ENCODE measurements at regions of chr15 and their contacts with region 1.

Region 1: DNA sequence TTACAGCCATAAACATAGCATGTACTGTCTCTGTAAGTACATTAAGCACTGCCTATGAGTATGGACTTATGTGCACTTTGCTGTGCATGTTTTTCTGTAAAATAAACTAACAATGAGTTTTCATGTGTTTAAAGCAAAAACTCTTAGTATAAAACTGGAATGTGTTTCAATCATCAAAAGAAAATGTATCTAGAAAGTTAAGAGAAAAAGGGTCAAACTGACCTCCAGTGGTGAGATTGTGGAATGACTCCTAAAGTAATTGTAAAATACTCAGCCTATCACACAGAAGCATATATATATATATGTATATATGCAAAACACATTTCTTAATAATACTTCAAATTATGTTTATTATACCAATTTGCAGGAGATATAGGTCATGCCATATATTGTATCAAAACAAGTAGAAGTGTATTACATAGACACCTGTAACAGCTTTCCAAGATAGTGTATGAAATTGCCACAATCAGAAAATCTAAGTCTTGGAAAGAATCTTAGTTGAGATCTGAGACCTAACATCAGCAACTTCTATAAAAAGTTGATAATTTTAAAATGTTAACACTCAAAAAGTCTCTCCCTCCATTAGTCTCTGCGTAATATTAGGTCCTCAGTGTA is 199.6 kb downstream of the FMN1 start:
- DNase-seq: no peak
- ATAC-seq: no peak

Region 2: DNA sequence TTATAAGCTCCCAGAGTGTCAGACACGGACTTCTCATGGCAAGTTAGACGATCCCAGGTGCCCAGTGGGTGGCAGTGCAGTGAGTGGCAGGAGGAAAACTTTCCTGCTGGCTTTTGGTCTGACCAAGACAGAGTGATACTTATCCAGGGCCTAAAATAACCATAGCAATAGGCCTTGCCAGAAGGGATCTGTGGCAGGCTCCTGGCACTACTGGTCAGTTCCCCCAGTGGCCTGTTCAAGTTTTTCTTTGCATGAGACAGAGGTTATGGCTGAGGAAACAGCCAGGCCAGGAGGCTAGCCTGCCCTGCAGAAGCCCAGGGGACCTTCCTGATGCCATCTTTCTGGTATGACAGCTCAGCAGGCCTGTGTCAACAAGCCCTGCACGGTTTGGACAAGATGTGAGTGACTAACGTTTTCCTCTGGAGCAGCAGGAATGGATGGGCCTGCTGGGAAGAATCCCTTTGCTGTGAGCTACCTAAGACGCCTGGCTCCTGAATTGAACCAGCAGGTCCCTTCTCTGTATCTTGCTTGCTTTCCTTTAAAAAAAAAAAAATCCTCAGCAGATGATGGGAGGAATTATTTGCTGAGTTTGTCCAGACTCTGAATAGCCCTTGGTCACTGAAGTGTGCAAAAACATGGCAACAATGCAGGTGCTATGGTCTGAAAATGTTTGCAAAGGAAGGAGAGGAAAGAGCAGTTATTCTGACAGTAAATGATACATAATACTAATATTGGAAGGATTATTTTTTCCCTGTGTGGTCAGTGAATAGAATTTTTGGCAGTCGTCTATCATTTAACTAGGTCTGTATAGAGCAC is 335.4 kb before region 1 on chr15:
- intact Hi-C with region 1: loop called (anchors 2 kb)
- DNase-seq: no peak
- ATAC-seq: peak; percentile 54

Region 3: GRCh38 chr15:32844118-32844711 is 150.7 kb before region 1 on chr15:
- intact Hi-C with region 1: loop called (anchors 2 kb)
- DNase-seq: no peak
- ATAC-seq: no peak

Region 4: DNA sequence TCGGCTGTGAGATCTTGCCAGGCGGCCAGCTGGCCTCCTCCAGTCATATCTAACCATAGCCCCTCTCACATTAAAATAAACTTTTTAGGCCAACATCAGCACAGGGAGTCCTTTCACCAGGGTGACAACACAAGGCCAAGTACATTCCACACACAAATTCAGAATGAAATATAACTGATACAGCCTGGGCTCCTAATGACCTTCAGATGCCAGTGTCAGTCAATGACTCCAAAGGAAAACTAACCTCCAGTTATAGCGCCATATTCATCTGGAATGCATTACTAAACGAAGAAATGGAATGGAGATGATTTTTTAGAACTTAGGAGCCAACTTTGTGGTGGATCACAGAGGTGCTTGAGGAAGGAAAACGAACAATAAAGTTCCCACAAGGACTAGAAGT is 71.7 kb before region 1 on chr15:
- intact Hi-C with region 1: no loop called
- DNase-seq: no peak
- ATAC-seq: no peak

Region 5: GRCh38 chr15:32959077-32959476 is 35.8 kb before region 1 on chr15:
- intact Hi-C with region 1: no loop called
- DNase-seq: no peak
- ATAC-seq: peak; percentile 83

Region 6: GRCh38 chr15:33226559-33227181 is 231.8 kb after region 1 on chr15:
- intact Hi-C with region 1: no loop called
- DNase-seq: no peak
- ATAC-seq: peak; percentile 62

Measured in Right ventricle myocardium inferior (tissue), 1 donor.